Transverse colon (tissue), 4 donors: ENCODE measurements at regions of chr9 and their contacts with region 1.

Region 1: DNA sequence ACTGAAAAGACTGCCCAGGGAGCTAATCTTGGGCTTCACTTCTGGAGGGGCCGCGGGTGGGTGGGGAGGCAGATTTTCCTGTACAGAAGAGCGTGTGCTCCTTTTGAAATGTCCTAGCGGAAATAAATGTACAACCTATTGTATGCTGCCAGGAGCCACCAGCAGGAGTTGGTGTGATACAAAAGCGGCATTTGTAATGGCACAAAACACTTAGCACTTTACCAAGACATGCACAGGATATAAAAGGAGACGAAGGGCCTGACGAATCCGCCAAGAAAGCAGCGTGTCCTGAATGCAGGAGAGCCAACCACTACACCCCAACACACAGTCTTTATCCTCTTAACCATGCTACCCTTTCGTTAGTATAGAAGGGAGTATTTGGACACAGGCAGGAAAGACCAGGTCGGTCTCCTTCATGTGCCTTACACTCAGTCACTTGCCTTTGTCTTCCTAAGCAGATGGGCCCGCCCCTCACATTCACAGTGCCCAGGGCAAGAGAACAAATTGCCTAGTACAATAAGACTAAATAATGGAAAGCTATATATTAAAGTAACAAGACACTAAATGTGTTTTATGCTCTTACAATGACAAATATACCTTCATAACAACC is 218.1 kb downstream of the TRIM32 start:
- DNase-seq: no peak
- H3K4me3 ChIP-seq: no peak overlapping the region
- H3K27ac ChIP-seq: no peak overlapping the region
- H3K4me1 ChIP-seq: no peaks in the 10 kb centered on the region
- H3K27me3 ChIP-seq: no peaks in the 10 kb centered on the region
- CTCF ChIP-seq: no peak
- EP300 ChIP-seq: no peak
- POLR2A ChIP-seq: no peak

Region 2: DNA sequence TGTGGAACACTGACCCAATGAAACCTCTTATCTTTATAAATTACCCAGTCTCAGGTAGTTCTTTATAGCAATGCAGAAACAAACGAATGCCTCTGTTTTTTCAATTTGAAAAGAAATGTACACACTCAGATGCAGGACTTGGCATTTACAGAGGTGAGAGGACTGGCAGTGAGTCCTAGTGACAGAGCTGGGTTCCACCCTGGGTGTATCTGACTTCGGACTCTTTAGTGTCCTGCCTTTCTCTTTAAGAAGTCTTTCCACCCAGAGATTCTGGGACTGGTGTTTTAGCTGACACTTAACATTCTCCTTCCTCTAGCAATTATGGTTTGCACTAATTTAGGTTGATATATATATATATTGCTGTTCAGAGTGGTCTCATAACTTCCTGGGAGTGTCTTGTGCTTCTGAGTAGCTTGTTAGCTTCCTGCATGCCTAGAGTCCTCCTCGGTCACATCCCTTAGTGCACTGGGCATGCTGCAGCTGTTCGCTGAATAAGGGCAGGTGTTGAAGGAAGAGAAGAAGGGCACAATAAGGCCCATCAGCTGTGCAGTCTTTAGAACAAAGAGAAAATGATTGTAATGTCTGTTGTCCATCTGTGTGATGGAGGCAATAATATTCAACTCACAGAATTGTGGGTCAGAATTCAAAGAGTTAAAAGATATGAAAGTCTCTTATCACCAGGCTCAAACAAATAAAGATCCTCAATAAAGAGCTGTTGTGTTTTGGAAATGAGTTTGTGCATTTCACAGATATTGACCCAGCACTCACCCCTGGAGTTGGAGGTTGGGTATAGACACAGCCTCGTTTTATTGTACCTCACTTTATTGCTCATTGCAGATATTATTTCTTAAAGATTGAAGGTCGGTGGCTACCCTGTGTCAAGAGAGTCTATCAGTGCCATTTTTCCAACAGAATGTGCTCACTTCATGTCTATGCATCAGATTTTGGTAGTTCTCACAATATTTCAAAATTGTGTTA is 31.0 kb before region 1 on chr9:
- in situ Hi-C with region 1: no loop called
- intact Hi-C with region 1: loop called (anchors 1 kb)
- DNase-seq: no peak
- H3K4me3 ChIP-seq: no peak overlapping the region
- H3K27ac ChIP-seq: peak overlapping the region in 1 of 4 donors; percentile 13
- H3K4me1 ChIP-seq: no peaks in the 10 kb centered on the region
- H3K27me3 ChIP-seq: no peaks in the 10 kb centered on the region
- CTCF ChIP-seq: no peak
- EP300 ChIP-seq: no peak
- POLR2A ChIP-seq: no peak